GM10248 (cell line): ENCODE measurements at regions of chr2 and their contacts with region 1.

Region 1: DNA sequence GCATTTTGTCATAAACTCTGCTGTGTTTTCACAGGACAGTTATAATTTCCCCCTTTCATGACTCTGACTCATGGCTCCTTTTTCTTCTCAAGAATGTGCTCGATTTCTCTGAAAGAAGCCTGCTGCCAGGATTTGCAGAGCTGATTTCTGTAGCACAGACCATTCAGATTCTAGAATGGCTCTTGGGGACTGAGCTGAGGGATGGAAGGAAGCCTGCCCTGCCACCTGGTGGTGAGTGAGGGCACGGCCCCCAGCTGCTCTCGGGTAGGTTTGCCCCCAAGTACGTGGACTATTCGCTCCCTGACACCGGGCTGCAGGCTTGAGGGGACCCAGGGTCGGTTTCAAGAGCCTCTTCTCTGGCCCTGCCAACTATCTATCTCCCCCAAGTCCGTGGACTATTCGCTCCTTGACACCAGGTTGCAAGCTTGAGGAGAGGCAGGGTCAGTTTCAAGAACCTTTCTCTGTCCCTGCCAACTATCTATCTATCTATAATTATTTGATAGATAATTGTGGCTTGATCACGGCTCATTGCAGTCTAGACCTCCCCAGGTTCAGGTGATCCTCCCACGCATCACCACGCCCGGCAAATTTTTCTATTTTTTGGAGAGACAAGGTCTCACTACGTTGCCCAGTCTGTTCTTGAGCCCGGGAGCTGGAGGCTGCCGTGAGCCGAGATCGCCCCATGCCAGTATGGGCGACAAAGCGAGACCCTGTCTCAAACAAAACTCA is 1.4 kb upstream of the SMYD5 start:
- DNase-seq: peak; percentile 85
- CTCF ChIP-seq: peak; percentile 94

Region 2: GRCh38 chr2:72399879-72400278 is 812.7 kb before region 1 on chr2:
- CTCF ChIA-PET with region 1: no interaction called
- POLR2A ChIA-PET with region 1: no interaction called
- DNase-seq: no peak
- CTCF ChIP-seq: no peak

Region 3: DNA sequence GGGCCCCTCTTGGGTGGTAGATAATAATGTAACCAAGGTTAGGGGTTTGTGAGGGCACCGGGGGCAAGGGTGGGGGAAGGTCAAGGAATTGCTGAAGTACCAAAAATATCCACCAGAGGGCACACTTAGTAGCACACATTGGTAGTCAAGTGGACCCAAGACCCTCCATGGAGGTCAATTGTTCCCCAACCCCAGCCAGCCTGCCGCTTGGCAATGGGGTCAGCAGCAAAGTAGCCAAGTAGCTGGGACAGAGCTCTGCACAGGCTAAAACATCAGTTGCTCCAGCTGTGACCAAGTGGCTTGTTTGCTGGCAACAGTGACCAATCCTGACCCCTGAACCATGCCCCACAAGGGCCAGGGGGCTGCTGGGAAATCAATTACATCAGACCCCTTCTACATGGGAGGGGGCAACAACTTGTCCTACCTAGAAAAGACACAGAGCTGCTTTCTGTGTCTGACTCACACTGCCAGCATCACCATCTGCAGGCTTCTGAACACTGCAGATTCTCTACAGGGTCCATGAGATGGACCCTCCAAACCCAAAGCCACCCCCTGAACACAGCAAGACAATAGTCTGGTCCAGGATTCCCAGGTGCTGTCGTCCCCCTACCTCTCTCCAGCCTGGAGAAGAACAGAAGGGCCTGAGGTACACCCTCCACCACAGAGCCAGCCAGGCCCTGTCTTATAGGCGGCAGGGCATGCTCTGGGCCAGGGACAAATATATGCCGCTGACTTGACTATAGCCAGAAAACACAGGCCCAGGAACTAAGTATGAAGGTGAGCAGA is 219.3 kb before region 1 on chr2:
- CTCF ChIA-PET with region 1: interaction called, 13 read pairs
- POLR2A ChIA-PET with region 1: no interaction called
- DNase-seq: peak; percentile 78
- CTCF ChIP-seq: peak; percentile 70

Region 4: GRCh38 chr2:73187549-73187948 is 25.1 kb before region 1 on chr2:
- CTCF ChIA-PET with region 1: interaction called, 11 read pairs
- POLR2A ChIA-PET with region 1: no interaction called
- DNase-seq: no peak
- CTCF ChIP-seq: no peak

Region 5: DNA sequence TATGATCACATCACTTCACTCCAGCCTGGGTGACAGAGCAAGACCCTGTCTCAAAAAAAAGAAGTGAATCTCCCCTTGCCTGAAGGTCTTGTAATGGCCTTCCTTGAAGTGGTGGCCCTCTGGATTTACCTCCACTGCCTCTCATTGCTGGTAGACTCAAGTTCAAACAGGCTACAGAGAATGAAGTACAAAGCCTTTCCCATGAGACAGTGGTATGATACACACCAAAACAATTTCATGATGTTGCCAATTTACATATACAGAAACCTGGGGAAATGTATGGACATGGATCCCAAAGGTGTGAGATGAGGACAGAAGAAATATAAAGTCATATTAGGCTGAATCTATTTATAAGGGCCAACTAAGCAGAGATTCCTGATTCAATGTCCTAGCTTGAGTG is 15.0 kb before region 1 on chr2:
- CTCF ChIA-PET with region 1: interaction called, 17 read pairs
- POLR2A ChIA-PET with region 1: no interaction called
- DNase-seq: no peak
- CTCF ChIP-seq: no peak

Region 6: DNA sequence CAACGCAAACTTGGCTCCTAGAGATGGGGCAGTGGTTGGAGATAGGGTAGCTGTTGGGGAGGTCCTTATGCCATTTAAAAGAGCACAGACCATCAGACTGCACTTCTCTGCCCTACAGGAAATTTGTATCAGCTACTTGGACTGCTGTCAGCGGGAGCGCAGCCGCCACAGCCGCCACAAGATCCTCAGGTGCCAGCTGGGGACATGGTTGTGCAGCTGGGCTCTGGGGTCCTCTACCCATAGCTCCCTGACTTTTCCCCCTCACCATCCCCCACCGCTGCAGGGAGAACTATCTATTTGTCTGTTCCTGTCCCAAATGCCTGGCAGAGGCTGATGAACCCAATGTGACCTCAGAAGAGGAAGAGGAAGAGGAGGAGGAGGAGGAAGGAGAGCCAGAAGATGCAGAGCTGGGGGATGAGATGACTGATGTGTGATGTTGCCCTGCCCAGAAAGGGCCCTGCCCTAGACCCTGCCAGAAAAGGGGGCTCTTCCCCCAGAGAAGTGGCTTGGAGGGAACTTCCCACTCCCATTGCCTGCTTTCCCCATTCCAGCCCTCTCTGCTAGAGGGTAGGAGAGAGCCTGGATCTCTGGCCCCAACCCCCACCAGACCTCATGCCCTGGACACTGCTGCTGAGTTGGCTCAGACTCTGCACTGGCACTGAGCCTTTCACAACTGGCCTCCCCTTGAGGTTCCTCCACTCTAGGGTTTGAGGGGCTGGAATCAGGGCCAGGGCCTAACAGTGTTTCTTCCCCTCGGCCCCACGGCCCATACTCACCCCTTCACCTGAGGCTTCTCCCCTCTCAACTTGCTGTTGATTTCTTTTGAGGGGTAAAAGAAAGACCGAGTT is 13.1 kb after region 1 on chr2:
- CTCF ChIA-PET with region 1: interaction called, 70 read pairs
- POLR2A ChIA-PET with region 1: no interaction called
- DNase-seq: no peak
- CTCF ChIP-seq: no peak

Region 7: DNA sequence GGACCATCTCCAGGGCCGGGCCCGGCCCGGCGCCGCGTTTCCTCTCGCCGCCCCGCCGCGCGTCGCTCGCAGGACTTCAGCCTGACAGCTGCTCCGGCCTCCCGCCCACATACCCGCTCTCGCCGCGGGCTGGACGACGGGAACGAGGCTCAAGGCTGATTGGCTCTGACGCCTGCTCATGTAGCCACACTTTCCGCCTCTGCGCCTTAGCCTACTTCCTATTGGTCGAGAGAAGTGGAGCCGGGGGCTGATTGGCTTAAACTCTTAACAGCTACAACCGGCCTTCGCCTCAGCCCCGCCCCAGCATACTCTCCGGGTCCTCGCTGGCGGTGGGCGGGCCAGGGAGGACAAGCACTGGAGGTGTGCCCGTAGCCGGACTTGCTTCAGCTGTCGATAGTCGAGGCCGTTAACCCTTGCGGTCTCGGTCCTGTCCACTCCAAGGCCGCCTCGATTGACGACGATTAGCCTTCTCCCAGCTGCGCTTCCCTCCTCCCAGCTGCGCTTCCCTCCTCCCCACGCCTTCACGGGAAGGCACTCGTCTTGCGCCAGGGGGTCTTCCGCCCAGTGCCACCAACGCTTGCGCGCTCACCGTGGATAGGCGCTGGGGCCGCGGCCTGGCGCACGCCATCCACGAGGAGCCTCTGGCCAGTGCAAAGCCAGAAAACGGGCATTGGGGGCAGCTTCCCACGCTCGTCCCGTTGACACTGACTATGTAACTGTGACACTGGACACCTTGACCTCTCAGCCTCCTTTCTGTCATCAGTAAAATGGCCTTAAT is 20.7 kb after region 1 on chr2 and contains the start of gene PRADC1:
- CTCF ChIA-PET with region 1: interaction called, 70 read pairs
- POLR2A ChIA-PET with region 1: interaction called, 6 read pairs
- DNase-seq: peak; percentile 98
- CTCF ChIP-seq: no peak